ENCODE measurements at regions of chr13 and their contacts with region 1.

Region 1: GRCh38 chr13:50365408-50366391 is 350.5 kb downstream of the KCNRG start:
- DNase-seq: peak; percentile 61
- H3K4me3 Mint-ChIP-seq: peak overlapping the region; percentile 3
- H3K27ac Mint-ChIP-seq: peak overlapping the region; percentile 53
- H3K4me1 Mint-ChIP-seq: peaks cover 48% of the 10 kb centered on the region
- H3K27me3 Mint-ChIP-seq: peaks cover 67% of the 10 kb centered on the region

Region 2: DNA sequence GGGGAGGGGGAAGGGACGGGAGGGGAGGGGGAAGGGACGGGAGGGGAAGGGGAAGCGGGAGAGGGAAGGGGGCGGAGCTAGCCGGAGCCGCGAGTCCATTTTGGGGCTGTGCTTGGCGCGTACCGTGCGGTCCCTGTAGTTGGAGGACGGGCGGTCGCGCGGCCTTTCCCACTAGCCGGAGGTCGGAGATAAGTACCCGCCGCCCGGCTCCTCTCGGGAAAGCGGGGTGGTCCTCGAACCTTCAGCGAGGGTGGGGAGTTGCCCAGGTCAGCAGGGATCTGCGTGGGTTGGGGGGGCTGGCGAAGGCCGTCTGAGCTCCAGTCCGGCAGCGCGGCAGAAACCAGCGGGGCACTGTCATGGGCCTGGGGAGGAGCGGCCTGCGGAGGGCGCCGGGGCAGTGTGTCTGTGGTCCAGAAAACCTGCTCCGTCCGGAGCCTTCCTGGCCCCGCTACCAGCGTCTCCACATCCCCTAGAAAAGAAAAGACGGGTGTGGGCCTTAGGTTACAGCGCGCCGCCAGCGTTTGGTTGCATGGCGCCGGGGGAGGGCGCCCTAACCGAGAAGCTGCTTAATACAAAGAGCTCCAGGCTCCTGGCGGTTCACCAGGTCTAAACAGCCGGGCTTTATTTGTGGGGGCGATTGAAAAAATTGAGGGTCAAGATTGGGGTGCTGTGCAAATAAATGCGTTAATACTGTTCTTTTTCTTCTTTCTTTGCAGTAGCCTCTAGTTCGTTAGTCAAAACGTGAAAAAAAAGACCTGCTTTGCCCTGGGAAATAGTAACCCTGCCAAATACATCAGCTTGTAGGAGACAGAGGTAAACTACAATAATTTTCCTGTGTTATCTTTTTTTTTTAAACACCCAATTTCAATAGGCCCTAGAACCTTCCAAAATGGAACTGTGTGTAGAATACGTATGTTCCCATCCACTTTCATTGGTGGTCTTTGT is 368.5 kb before region 1 on chr13 and contains the start of gene TRIM13:
- intact Hi-C with region 1: loop called (anchors 10 kb)
- DNase-seq: peak; percentile 79
- H3K4me3 Mint-ChIP-seq: peak within 1 kb of the TSS; percentile 85
- H3K27ac Mint-ChIP-seq: peak within 1 kb of the TSS; percentile 89
- H3K4me1 Mint-ChIP-seq: peaks cover 31% of the 10 kb centered on the region
- H3K27me3 Mint-ChIP-seq: no peaks in the 10 kb centered on the region
- total RNA-seq, gene TRIM13: 17.2 and 17.9 TPM in 2 replicates

Region 3: GRCh38 chr13:50140581-50141374 is 224.9 kb before region 1 on chr13:
- intact Hi-C with region 1: loop called (anchors 1 kb)
- DNase-seq: no peak
- H3K4me3 Mint-ChIP-seq: no peak overlapping the region
- H3K27ac Mint-ChIP-seq: no peak overlapping the region
- H3K4me1 Mint-ChIP-seq: peaks cover 8% of the 10 kb centered on the region
- H3K27me3 Mint-ChIP-seq: peaks cover 62% of the 10 kb centered on the region

Region 4: GRCh38 chr13:50236898-50237318 is 128.8 kb before region 1 on chr13:
- intact Hi-C with region 1: loop called (anchors 2 kb)
- DNase-seq: peak; percentile 43
- H3K4me3 Mint-ChIP-seq: no peak overlapping the region
- H3K27ac Mint-ChIP-seq: peak overlapping the region; percentile 56
- H3K4me1 Mint-ChIP-seq: peaks cover 38% of the 10 kb centered on the region
- H3K27me3 Mint-ChIP-seq: peaks cover 32% of the 10 kb centered on the region

Region 5: GRCh38 chr13:50319635-50320255 is 46.0 kb before region 1 on chr13:
- intact Hi-C with region 1: loop called (anchors 5 kb)
- DNase-seq: no peak
- H3K4me3 Mint-ChIP-seq: no peak overlapping the region
- H3K27ac Mint-ChIP-seq: no peak overlapping the region
- H3K4me1 Mint-ChIP-seq: peaks cover 13% of the 10 kb centered on the region
- H3K27me3 Mint-ChIP-seq: peaks cover 22% of the 10 kb centered on the region

Measured in activated T-helper 2 cell treated with anti-CD3 and anti-CD28 coated beads, Interferon-gamma antibody, Interleukin-2, Interleukin-4, amounts not matched to agents 10 μg/mL and 5 μg/mL and 100 μg/mL, durations not matched to agents 14 hours and 24 hours and 36 hours (primary cell).